ENCODE measurements at regions of chr7 and their contacts with region 1.

Region 1: DNA sequence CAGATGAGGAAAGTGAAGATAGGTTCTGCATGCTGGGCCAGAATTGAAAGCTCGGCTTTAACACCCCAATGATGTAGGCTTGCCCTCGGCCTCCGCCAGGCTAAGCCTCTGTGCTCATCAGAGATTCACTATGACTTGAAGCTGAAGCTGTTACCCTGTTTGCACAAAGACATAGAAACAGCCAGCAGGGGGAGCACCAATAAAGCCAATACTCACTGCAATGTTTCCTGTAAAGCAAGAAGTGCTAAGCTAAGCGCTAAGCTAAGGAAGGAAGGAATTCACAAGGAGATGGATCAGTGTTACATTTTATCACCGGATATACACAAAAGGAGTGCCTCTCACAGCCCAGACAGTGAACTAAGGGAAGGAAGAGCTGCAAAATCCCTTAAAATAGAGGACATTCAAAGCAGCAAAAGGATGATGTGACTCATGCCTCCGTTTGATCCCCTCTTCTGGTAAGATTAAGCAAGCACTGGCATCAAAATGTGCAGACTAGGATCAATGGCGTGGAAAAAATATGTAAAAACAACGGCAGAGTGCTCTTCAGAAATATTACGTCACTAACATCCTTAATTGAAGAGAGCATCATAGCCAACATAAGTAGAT is 153.8 kb downstream of the COBL start:
- DNase-seq: peak; percentile 84 to 89
- H3K4me3 ChIP-seq: no peak overlapping the region
- H3K4me3 Mint-ChIP-seq: no peak overlapping the region
- H3K27ac Mint-ChIP-seq: no peak overlapping the region
- H3K4me1 ChIP-seq: peaks cover 4% of the 10 kb centered on the region
- H3K4me1 Mint-ChIP-seq: peaks cover 19% of the 10 kb centered on the region
- H3K27me3 ChIP-seq: no peaks in the 10 kb centered on the region
- H3K27me3 Mint-ChIP-seq: no peaks in the 10 kb centered on the region
- CTCF ChIP-seq: peak; percentile 86 to 91

Region 2: DNA sequence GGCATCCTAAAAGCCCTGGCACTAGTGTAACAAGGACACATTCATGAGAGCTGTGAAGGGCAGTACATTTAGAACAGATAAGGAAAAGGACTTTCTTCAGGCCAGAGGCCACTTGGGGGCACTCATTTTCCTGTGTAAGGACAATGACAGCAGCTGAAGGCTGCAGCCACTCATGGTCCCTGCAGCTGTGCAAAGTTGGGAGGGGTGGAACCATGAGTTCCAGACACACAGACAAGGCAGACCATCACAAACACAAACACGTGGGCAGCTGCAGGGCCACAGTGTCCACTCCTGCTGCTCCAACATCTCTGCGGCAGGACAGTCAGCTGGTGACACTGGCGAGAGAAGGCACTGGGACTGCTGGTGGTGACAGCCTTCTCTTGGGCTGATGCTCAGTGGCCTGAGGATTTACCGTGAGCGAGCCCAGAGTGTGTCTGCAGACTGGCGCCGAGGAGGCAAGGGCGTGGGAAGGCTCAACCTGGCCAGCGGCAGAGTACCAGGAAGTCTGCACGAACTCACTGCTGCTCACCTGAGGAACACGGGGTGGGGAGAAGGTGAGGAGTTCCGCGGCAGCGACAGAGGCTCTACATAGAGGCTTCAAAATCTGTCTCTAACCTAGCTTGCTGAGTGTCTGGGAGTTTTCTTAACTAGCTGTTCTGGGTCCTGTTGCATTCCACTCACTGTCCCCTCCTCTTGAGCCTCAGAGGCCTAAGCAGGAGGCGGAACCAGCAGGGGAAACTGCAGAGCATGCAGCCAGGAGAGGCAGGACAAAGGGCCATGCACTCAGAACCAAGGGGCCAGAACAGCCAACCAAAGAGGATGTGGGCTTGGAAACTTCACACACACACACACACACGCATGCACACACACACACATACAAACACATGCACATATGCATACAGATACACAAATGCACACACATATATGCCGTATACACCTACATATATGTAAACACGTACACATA is 521.1 kb before region 1 on chr7:
- CTCF ChIA-PET with region 1: interaction called, 3 read pairs
- POLR2A ChIA-PET with region 1: no interaction called
- intact Hi-C with region 1: loop called (anchors 5 kb)
- DNase-seq: peak in 1 of 2 experiments; percentile 32
- H3K4me3 ChIP-seq: no peak overlapping the region
- H3K4me3 Mint-ChIP-seq: no peak overlapping the region
- H3K27ac Mint-ChIP-seq: no peak overlapping the region
- H3K4me1 ChIP-seq: no peaks in the 10 kb centered on the region
- H3K4me1 Mint-ChIP-seq: no peaks in the 10 kb centered on the region
- H3K27me3 ChIP-seq: no peaks in the 10 kb centered on the region
- H3K27me3 Mint-ChIP-seq: no peaks in the 10 kb centered on the region
- CTCF ChIP-seq: peak in 1 of 2 experiments; percentile 49

Region 3: DNA sequence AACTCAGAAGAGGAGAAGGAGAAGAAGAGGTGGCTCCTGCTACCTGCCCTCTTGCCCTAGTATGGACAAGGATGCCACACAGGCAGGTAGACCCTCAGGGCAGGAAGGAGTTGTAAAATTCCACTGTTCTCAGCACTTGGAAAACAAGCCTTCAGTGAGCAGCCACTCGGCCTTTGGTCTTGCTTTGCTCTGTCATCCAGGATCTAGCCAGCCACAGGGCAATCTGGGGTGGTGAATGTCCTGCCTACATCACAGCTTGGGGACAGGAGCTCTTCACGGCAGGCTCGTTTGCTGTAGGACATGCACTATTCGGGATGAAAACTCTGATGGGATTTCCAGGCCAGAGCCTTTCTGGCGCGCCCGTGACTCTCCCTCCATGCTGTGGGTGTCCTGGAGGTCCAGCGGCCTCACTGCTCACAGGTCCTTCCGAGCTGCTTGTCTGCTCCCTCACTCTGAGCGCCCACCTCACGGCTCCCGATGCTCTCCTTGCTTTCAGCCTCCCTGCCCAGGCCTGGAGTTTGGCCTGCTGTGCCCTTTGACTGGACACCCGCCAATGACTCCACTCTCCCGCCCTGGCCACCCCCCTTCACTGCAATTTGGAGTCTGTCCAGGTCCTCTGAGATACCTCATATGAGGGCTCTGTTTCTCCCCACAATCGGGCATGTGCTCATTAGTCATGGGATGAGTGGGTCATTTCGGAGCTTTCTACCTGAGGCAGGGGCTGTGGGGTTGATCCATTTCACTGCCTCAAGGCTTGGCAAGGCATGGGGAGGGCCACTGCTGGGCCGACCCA is 152.9 kb before region 1 on chr7:
- CTCF ChIA-PET with region 1: no interaction called
- POLR2A ChIA-PET with region 1: interaction called, 3 read pairs
- intact Hi-C with region 1: loop called (anchors 10 kb)
- DNase-seq: no peak
- H3K4me3 ChIP-seq: no peak overlapping the region
- H3K4me3 Mint-ChIP-seq: no peak overlapping the region
- H3K27ac Mint-ChIP-seq: no peak overlapping the region
- H3K4me1 ChIP-seq: no peaks in the 10 kb centered on the region
- H3K4me1 Mint-ChIP-seq: peaks cover 8% of the 10 kb centered on the region
- H3K27me3 ChIP-seq: no peaks in the 10 kb centered on the region
- H3K27me3 Mint-ChIP-seq: no peaks in the 10 kb centered on the region
- CTCF ChIP-seq: no peak

Region 4: GRCh38 chr7:51224811-51225612 is 62.2 kb after region 1 on chr7:
- CTCF ChIA-PET with region 1: interaction called, 15 read pairs
- POLR2A ChIA-PET with region 1: no interaction called
- intact Hi-C with region 1: no loop called
- DNase-seq: peak in 1 of 2 experiments; percentile 60
- H3K4me3 ChIP-seq: no peak overlapping the region
- H3K4me3 Mint-ChIP-seq: no peak overlapping the region
- H3K27ac Mint-ChIP-seq: no peak overlapping the region
- H3K4me1 ChIP-seq: peaks cover 16% of the 10 kb centered on the region
- H3K4me1 Mint-ChIP-seq: peaks cover 23% of the 10 kb centered on the region
- H3K27me3 ChIP-seq: no peaks in the 10 kb centered on the region
- H3K27me3 Mint-ChIP-seq: no peaks in the 10 kb centered on the region
- CTCF ChIP-seq: peak in 1 of 2 experiments; percentile 63

Region 5: DNA sequence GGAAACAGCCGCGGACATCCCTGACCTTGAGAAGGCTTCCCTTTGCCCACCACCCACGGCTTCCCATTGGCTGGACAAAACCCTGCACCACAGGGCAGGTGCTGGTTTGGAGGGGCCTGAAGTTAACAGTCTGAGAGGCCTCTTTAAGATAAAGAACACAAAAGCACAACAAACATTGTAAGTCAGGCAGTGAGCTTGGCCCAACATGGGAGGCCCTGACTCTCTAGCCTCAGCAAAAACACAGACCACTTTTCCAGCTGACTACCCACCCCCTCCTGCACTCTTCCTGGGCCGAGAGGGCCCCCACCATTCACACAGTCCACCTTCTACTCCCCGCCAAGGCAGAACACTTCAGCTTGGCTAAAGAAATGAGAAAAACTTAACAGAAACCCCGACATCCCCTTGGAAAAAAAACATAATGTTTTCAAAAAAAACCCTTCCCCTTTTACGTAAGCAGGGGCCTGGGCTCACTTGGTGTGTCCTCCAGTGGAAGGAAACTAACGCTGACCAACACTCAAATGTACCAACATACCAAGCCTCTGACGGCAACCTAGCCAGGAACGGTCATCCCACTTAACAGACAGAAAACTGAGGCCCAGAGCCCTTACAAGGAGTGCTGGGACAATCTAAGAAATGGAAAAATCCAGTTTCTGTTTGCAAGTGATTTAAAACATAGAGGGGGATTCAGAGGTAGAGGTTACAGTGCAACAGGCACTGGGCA is 72.9 kb after region 1 on chr7:
- CTCF ChIA-PET with region 1: no interaction called
- POLR2A ChIA-PET with region 1: no interaction called
- intact Hi-C with region 1: no loop called
- DNase-seq: no peak
- H3K4me3 ChIP-seq: no peak overlapping the region
- H3K4me3 Mint-ChIP-seq: no peak overlapping the region
- H3K27ac Mint-ChIP-seq: peak overlapping the region; percentile 83
- H3K4me1 ChIP-seq: peaks cover 54% of the 10 kb centered on the region
- H3K4me1 Mint-ChIP-seq: peaks cover 56% of the 10 kb centered on the region
- H3K27me3 ChIP-seq: no peaks in the 10 kb centered on the region
- H3K27me3 Mint-ChIP-seq: no peaks in the 10 kb centered on the region
- CTCF ChIP-seq: no peak

Region 6: DNA sequence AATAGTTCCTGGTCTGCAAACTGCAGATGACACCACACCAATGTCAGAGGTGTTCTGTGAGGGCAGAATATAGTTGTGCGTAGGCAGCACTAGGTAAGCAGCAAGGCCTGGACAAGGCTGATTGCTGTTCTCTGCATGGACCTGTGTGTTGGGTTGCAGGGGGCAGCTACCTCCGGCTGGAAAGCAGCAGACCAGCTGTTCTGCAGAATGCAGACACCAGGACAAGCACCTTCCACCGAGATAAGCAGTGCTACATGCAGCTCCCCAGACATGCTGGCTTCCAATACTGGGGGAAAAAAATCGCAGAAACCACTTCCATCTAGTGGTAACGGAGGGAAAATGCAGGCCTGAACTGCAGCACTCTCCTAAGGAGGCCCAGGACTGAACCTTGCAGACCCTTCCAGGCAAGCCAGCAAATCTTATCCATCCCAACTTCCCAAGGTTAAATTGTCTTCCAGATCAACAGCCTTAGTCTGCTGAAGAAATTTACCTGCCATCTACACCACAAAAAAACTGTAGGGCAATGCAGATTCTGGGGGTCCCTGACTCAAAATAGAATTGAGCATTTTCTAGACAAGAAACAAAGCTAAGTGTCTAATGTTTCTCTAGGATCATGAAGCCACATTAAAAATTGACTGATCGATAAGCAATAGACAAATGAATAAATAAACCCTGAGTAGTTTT is 204.2 kb after region 1 on chr7:
- CTCF ChIA-PET with region 1: interaction called, 153 read pairs
- POLR2A ChIA-PET with region 1: no interaction called
- intact Hi-C with region 1: loop called (anchors 1 kb)
- DNase-seq: peak; percentile 79
- H3K4me3 ChIP-seq: no peak overlapping the region
- H3K4me3 Mint-ChIP-seq: no peak overlapping the region
- H3K27ac Mint-ChIP-seq: peak overlapping the region; percentile 52
- H3K4me1 ChIP-seq: peaks cover 14% of the 10 kb centered on the region
- H3K4me1 Mint-ChIP-seq: peaks cover 22% of the 10 kb centered on the region
- H3K27me3 ChIP-seq: no peaks in the 10 kb centered on the region
- H3K27me3 Mint-ChIP-seq: no peaks in the 10 kb centered on the region
- CTCF ChIP-seq: peak; percentile 89 to 90

Measured in Caco-2 (cell line).